ENCODE measurements at regions of chr11 and their contacts with region 1.

Region 1: DNA sequence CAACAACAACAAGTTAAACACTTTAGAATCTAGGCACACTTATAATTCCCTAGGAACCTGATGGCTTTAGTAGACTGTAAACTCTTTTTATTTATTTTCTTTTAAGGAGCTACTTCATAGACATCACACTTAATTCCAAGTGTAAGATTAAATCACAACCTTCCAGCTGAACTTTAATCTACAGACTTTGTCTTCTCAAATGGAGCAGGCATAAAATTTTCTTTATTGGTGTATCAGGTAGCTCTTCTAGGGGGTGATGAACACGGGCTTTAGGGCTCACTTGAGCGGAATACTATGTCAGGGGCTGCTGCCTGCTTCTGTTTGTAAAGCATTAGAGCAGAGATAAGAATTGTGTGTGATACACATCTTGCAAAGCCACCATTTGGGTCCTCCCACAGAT is 525.8 kb upstream of the FAT3 start:
- DNase-seq: no peak
- ATAC-seq: no peak
- H3K4me3 ChIP-seq: no peak overlapping the region
- H3K27ac ChIP-seq: no peak overlapping the region
- H3K4me1 ChIP-seq: no peaks in the 10 kb centered on the region
- H3K27me3 ChIP-seq: no peaks in the 10 kb centered on the region
- CTCF ChIP-seq: no peak

Region 2: GRCh38 chr11:91756829-91757480 is 58.1 kb after region 1 on chr11:
- intact Hi-C with region 1: loop called in 1 of 10 experiments (anchors 10 kb)
- DNase-seq: no peak
- ATAC-seq: no peak
- H3K4me3 ChIP-seq: no peak overlapping the region
- H3K27ac ChIP-seq: no peak overlapping the region
- H3K4me1 ChIP-seq: no peaks in the 10 kb centered on the region
- H3K27me3 ChIP-seq: no peaks in the 10 kb centered on the region
- CTCF ChIP-seq: no peak